Activated CD8-positive, alpha-beta T cell treated with anti-CD3 and anti-CD28 coated beads for 36 hours (primary cell): ENCODE measurements at regions of chr11 and their contacts with region 1.

Region 1: GRCh38 chr11:102495161-102496042 is 35.1 kb downstream of the MMP7 start:
- DNase-seq: peak; percentile 51
- ATAC-seq: peak; percentile 68
- H3K4me3 Mint-ChIP-seq: no peak overlapping the region
- H3K27ac Mint-ChIP-seq: peak overlapping the region; percentile 14
- H3K4me1 Mint-ChIP-seq: peaks cover 23% of the 10 kb centered on the region
- H3K27me3 Mint-ChIP-seq: peaks cover 1% of the 10 kb centered on the region
- CTCF ChIP-seq: peak; percentile 92

Region 2: DNA sequence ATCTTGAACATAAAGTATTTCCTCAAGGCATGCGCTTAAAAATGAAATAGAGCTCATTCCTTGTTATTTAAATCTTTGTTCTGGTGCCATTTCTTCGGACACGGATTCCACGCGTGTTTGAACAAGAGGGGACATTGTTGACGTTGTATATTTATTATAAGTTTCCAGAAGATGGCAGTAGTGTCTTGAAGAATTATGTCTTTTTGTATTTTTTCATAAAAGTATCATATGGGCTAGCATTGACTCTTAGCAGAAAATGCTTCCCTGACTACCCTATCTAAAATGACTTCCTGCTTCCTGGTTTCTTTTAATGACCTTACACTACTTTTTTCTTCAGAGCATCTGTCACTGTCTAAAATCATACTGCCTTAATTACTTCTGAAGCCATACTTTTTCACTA is 128.0 kb before region 1 on chr11:
- CTCF ChIA-PET with region 1: interaction called, 28 read pairs
- POLR2A ChIA-PET with region 1: interaction called, 3 read pairs
- intact Hi-C with region 1: no loop called
- DNase-seq: no peak
- ATAC-seq: peak; percentile 64
- H3K4me3 Mint-ChIP-seq: no peak overlapping the region
- H3K27ac Mint-ChIP-seq: peak overlapping the region; percentile 34
- H3K4me1 Mint-ChIP-seq: peaks cover 30% of the 10 kb centered on the region
- H3K27me3 Mint-ChIP-seq: no peaks in the 10 kb centered on the region
- CTCF ChIP-seq: peak; percentile 56

Region 3: GRCh38 chr11:102451681-102452460 is 43.5 kb before region 1 on chr11:
- CTCF ChIA-PET with region 1: interaction called, 3 read pairs
- POLR2A ChIA-PET with region 1: no interaction called
- intact Hi-C with region 1: loop called (anchors 2 kb)
- DNase-seq: peak; percentile 88
- ATAC-seq: peak; percentile 64
- H3K4me3 Mint-ChIP-seq: peak overlapping the region; percentile 98
- H3K27ac Mint-ChIP-seq: peak overlapping the region; percentile 96
- H3K4me1 Mint-ChIP-seq: peaks cover 75% of the 10 kb centered on the region
- H3K27me3 Mint-ChIP-seq: no peaks in the 10 kb centered on the region
- CTCF ChIP-seq: peak; percentile 27

Region 4: DNA sequence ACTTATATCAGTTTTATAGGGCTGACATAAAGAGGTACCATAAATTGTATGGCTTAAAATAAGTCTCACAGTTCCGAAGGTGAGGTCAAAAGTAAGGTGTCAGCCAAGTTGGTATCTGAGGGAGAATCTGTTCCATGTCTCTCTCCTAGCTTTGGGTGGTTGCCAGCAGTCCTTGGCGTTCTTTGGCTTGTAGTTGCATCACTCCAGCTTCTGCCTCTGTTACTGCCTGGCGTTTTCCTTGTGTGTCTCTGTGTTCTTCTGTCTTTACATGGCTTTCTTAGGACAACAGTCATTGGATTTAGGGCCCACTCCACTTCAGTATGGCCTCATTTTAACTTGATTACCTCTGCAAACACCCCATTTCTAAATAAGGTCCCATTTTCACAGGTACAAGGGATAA is 18.5 kb after region 1 on chr11:
- CTCF ChIA-PET with region 1: interaction called, 15 read pairs
- POLR2A ChIA-PET with region 1: no interaction called
- intact Hi-C with region 1: no loop called
- DNase-seq: no peak
- ATAC-seq: no peak
- H3K4me3 Mint-ChIP-seq: no peak overlapping the region
- H3K27ac Mint-ChIP-seq: no peak overlapping the region
- H3K4me1 Mint-ChIP-seq: no peaks in the 10 kb centered on the region
- H3K27me3 Mint-ChIP-seq: no peaks in the 10 kb centered on the region
- CTCF ChIP-seq: no peak